A673 (cell line): ENCODE measurements at regions of chr1 and their contacts with region 1.

Region 1: DNA sequence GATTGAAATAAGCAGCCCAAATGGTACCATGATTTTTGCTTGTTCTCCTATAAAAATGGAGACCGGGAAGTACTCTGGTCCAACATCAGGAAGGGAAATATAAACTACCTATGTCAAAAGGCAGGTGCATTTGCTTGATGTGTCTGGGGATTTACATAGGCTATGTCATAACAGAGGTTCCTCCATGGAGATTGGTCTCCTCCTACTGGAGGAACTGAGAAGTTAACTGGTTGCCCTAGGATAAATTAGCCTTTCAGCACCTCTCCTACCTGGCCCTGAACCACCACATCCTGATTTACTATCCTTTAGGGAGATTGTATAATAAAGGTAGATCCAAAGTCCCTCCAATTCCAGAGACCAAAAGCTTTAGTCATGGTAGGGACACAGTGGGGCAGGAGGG is 1109.3 kb upstream of the B3GALT2 start:
- DNase-seq: peak; percentile 31
- H3K4me3 ChIP-seq: no peak overlapping the region
- H3K27ac ChIP-seq: no peak overlapping the region
- H3K4me1 ChIP-seq: no peaks in the 10 kb centered on the region
- H3K27me3 ChIP-seq: no peaks in the 10 kb centered on the region
- CTCF ChIP-seq: peak; percentile 50

Region 2: DNA sequence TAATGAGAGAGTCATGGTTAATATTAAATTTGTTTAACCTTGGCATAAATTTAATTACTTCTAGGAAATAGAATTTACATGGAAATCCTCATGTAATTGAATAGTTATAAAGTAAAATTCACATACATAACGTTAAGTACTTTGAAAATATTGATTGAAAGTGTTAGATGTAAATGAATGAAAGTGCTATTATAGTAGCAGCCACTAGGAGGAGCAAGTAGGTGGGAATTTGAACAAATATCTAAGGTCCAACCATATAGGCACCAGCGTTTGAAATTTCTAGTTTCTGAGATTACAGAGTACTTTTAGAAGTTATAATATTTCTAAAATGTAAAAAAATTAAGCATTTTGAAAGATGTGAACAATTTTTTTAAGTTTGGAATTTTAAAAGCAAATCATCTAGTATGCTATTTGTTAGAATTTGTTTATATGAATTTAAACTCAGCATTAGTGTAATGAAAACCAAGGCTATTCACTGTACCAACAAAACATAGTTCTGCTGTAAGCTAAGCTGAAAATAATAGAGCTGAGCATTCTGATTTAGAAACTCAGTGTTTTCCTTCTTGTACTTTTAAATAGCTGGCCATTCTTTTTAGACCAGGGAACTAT is 1112.6 kb before region 1 on chr1:
- CTCF ChIA-PET with region 1: no interaction called
- POLR2A ChIA-PET with region 1: no interaction called
- intact Hi-C with region 1: loop called (anchors 10 kb)
- DNase-seq: peak; percentile 68
- H3K4me3 ChIP-seq: peak overlapping the region; percentile 4
- H3K27ac ChIP-seq: no peak overlapping the region
- H3K4me1 ChIP-seq: peaks cover 64% of the 10 kb centered on the region
- H3K27me3 ChIP-seq: no peaks in the 10 kb centered on the region
- CTCF ChIP-seq: peak; percentile 88

Region 3: DNA sequence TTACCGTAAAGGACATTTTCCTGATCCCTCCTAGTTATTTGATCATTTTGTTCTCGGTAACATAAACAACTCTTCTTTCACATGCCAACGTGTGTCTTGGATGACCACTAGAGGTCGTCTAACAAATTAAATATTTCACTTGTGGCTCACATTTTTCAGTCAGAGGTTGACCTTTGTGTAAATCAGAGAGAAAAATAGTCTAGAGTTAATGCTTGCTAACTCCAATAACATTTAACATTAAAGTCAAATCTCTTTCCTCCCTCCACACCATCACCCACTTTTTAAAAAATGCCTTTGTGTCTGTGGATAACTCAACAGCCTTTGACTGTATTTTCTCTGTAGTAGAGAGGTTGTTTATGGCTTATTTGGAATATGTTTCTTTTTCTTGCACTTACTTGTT is 888.8 kb before region 1 on chr1:
- CTCF ChIA-PET with region 1: no interaction called
- POLR2A ChIA-PET with region 1: no interaction called
- intact Hi-C with region 1: loop called (anchors 5 kb)
- DNase-seq: peak; percentile 65
- H3K4me3 ChIP-seq: no peak overlapping the region
- H3K27ac ChIP-seq: no peak overlapping the region
- H3K4me1 ChIP-seq: no peaks in the 10 kb centered on the region
- H3K27me3 ChIP-seq: no peaks in the 10 kb centered on the region
- CTCF ChIP-seq: peak; percentile 84

Region 4: DNA sequence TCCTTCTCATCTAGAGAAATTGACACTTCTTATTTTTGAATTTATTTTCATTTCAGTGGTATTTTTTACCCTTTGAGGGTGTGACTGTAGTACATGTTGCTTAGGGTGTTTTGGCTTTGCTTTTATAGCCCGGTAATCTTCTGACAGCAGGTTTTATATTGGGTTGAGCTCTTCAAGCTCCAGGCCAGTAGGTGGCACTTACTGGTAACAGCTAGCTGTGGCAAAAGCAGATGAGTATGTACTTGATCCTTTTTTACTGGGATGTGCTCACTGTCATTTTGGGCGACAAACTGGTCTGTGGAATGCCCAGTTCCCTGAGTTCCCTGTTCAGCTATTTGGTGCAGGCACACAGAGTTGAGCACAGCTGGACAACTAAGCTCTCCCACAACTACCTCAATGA is 193.1 kb before region 1 on chr1:
- CTCF ChIA-PET with region 1: no interaction called
- POLR2A ChIA-PET with region 1: no interaction called
- intact Hi-C with region 1: loop called (anchors 5 kb)
- DNase-seq: peak; percentile 28
- H3K4me3 ChIP-seq: no peak overlapping the region
- H3K27ac ChIP-seq: no peak overlapping the region
- H3K4me1 ChIP-seq: peaks cover under 1% of the 10 kb centered on the region
- H3K27me3 ChIP-seq: no peaks in the 10 kb centered on the region
- CTCF ChIP-seq: peak; percentile 49